CD8-positive, alpha-beta T cell (primary cell): ENCODE measurements at regions of chr21 and their contacts with region 1.

Region 1: GRCh38 chr21:39189857-39190604 is 6.8 kb upstream of the PSMG1 start:
- DNase-seq: no peak
- ATAC-seq: no peak
- H3K4me3 ChIP-seq: no peak overlapping the region
- H3K4me3 Mint-ChIP-seq: no peak overlapping the region
- H3K27ac ChIP-seq: no peak overlapping the region
- H3K27ac Mint-ChIP-seq: peak overlapping the region; percentile 35
- H3K4me1 ChIP-seq: no peaks in the 10 kb centered on the region
- H3K4me1 Mint-ChIP-seq: peaks cover 22% of the 10 kb centered on the region
- H3K27me3 ChIP-seq: no peaks in the 10 kb centered on the region
- H3K27me3 Mint-ChIP-seq: no peaks in the 10 kb centered on the region
- CTCF ChIP-seq: no peak

Region 2: DNA sequence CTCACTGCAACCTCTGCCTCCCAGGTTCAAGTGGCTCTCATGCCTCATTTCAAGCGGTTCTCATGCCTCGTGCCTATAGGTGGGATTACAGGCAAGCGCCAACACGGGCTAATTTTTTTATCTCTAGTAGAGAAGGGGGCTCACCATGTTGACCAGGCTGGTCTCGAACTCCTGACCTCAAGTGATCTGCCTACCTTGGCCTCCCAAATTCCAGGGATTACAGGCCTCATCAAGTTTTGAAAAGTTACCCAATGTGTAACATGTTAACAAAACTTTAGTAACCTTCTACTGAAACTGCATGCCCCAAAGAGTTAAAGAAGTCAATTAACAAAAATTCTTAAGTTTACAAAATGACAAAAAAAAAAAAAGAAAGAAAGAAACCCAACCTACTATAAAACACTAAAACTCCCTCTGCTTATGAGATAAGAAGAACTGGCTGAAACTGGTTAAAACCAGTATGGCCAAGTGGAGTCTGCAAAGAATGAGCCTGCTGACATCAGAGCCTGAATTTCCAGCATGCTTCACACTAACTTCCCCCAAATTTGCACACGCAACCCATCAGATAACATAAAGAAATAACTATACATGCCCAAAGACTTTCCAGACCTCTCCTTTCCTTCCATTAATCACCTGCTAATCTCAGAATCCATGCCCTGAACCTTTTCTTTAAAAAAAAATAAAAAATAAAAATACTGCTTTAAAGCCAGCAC is 18.7 kb after region 1 on chr21:
- CTCF ChIA-PET with region 1: no interaction called
- POLR2A ChIA-PET with region 1: interaction called, 3 read pairs
- intact Hi-C with region 1: loop called in 1 of 2 experiments (anchors 2 kb)
- DNase-seq: peak in 1 of 9 experiments; percentile 28
- ATAC-seq: no peak
- H3K4me3 ChIP-seq: no peak overlapping the region
- H3K4me3 Mint-ChIP-seq: no peak overlapping the region
- H3K27ac ChIP-seq: no peak overlapping the region
- H3K27ac Mint-ChIP-seq: peak overlapping the region; percentile 79
- H3K4me1 ChIP-seq: no peaks in the 10 kb centered on the region
- H3K4me1 Mint-ChIP-seq: peaks cover 36% of the 10 kb centered on the region
- H3K27me3 ChIP-seq: no peaks in the 10 kb centered on the region
- H3K27me3 Mint-ChIP-seq: no peaks in the 10 kb centered on the region
- CTCF ChIP-seq: no peak

Region 3: GRCh38 chr21:40631211-40631610 is 1441.2 kb after region 1 on chr21:
- CTCF ChIA-PET with region 1: no interaction called
- POLR2A ChIA-PET with region 1: no interaction called
- intact Hi-C with region 1: no loop called
- DNase-seq: no peak
- ATAC-seq: no peak
- H3K4me3 ChIP-seq: no peak overlapping the region
- H3K4me3 Mint-ChIP-seq: no peak overlapping the region
- H3K27ac ChIP-seq: no peak overlapping the region
- H3K27ac Mint-ChIP-seq: no peak overlapping the region
- H3K4me1 ChIP-seq: no peaks in the 10 kb centered on the region
- H3K4me1 Mint-ChIP-seq: no peaks in the 10 kb centered on the region
- H3K27me3 ChIP-seq: peaks cover 0 to 2% of the 10 kb centered on the region in 2 experiments
- H3K27me3 Mint-ChIP-seq: no peaks in the 10 kb centered on the region
- CTCF ChIP-seq: no peak